RWPE1 (cell line): ENCODE measurements at regions of chr12 and their contacts with region 1.

Region 1: DNA sequence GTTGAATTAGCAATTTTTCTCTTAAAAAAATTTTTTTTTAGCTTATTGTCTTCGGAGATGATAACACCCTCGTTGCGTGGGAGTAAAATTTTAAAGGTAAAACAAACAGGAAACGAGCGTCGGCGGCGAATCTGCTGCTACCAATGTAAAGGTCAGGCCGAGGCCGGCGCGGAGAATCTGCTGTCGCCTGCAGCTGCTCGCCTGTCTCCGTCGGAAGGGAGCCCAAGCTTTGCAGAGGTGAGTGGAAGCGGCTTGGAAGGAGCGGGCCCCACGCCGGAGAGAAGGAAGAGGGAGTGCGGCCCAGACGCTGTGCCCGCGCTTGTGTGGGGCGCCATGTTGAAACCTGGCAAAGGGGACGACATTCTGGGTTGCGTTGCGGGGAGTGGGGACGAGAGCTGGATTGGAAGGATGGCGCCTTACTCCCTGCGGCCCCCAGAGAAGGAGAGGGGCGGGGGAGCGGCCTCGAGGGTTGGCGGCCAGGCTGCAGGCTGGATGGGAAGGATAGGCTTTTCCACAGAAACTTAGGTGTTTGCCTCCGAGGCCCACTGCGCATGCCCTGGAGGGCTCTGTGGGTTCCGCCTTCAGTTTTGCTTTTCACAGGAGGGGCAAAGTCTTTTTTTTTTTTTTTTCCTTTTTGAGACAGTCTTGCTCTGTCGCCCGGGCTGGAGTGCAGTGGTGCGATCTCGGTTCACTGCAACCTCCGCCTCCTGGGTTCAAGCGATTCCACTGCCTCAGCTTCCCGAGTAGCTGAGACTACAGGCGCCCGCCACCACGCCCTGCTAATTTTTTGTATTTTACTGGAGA is at the start of gene SNRNP35:
- DNase-seq: peak; percentile 52
- H3K27ac ChIP-seq: peak within 1 kb of the TSS; percentile 99
- CTCF ChIP-seq: no peak

Region 2: DNA sequence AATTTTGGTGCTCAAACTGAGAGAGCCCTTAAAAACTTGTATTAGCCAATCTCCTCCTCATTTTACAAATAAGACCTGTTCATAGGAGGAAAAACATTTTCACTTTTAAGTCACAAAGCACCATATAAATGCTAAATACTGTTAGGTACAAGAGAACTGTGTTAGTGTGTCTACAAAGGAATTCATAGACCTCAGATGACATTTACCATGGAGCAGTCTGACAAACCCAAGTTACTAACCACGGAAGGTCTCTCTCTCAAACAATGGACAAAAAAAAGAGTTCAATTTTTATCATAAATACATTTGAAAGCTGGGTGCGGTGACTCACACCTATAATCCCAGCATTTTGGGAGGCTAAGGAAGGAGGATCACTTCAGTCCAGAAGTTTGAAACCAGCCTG is 103.6 kb before region 1 on chr12:
- CTCF ChIA-PET with region 1: no interaction called
- POLR2A ChIA-PET with region 1: interaction called, 10 read pairs
- DNase-seq: no peak
- H3K27ac ChIP-seq: no peak overlapping the region
- CTCF ChIP-seq: no peak

Region 3: DNA sequence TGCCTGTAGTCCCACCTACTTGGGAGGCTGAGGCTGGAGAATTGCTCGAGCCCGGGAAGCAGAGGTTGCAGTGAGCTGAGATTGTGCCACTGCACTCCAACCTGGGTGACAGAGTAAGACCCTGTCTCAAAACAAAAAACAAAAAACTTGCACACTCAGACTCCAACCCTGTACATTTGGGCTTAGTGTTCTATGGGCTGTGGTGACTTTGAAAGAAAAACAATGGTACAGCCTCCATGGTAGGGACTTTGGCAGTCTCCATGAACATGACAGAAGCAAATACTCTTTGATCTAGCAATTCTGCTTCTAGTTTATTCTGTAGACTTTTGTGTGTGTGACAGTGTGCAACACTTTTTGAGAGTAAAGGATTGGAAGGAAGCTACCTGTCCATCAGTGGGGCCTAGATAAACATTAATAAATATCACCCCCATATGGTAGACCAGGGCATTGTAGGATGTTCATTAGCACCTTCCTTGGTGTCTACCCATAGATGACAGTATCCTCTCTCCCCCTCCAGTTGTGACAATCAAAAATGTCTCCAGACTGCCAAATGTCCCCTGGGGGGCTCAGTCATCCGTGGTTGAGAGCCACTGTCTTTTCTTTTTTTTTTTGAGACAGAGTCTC is 10.5 kb after region 1 on chr12:
- CTCF ChIA-PET with region 1: no interaction called
- POLR2A ChIA-PET with region 1: interaction called, 13 read pairs
- DNase-seq: no peak
- H3K27ac ChIP-seq: no peak overlapping the region
- CTCF ChIP-seq: no peak

Region 4: GRCh38 chr12:123512838-123513665 is 54.9 kb after region 1 on chr12:
- CTCF ChIA-PET with region 1: no interaction called
- POLR2A ChIA-PET with region 1: no interaction called
- DNase-seq: no peak
- H3K27ac ChIP-seq: peak overlapping the region; percentile 81
- CTCF ChIP-seq: no peak

Region 5: DNA sequence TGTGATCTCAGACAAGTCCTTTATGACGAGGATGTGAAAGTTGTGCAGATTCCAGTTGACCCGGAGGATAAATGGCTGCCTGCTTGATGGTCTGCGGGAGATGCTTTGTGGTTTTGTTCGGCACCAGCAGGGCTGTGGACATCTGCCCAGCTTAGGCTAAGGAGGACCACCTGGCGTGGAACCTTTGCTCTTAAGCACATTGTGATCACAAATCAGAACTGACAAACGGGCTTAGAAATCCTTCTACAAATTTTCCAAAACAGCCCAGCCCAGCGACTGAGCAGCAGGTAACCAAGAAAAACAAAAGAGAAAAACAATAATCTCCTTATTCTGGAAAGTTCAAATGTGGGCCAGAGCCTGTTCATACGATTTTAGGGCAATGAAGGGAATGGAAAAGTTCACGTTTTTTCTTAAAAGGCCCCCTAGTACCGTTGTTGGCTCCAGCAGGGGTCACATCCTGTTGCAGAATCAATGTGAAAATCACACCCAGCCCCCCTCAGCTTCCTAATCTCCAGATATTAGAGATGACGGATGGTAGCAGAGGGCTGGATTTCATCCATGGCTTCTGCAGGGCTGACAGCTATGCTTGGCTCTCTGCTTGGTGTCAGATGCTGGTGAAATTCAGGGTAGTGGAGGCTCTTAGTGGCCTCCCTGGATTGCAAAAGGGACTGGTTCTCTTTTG is 755.6 kb after region 1 on chr12:
- CTCF ChIA-PET with region 1: interaction called, 10 read pairs
- POLR2A ChIA-PET with region 1: no interaction called
- DNase-seq: no peak
- H3K27ac ChIP-seq: no peak overlapping the region
- CTCF ChIP-seq: no peak